ENCODE measurements at regions of chr17 and their contacts with region 1.

Region 1: GRCh38 chr17:43367737-43368242 is 31.0 kb upstream of the ARL4D start:
- DNase-seq: no peak
- H3K4me3 ChIP-seq: peak overlapping the region in 1 of 3 experiments; percentile 16
- H3K27ac ChIP-seq: peak overlapping the region; percentile 98
- H3K4me1 ChIP-seq: peaks cover 15% of the 10 kb centered on the region
- H3K27me3 ChIP-seq: no peaks in the 10 kb centered on the region
- CTCF ChIP-seq: no peak
- POLR2A ChIP-seq: peak; percentile 100

Region 2: DNA sequence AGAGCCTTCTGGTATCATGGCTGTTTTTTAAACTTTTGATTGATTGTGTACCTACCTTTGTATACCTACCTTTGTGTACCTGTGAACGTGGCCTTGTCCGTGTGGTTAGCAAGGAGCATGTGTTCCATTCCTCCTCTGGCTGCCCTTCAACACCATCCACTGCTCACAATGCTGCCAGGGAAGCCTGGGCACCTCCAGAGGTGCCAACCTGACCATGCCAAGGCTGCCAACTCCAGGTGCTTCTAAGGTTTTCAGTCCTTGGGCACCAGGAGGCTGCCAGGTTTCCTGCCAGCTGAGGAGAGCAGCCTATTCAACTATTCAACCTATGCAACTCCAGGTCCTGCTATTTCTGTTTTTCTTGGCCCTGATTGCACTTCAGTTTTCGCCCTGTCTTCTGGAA is 13.4 kb after region 1 on chr17:
- CTCF ChIA-PET with region 1: interaction called, 3 read pairs
- POLR2A ChIA-PET with region 1: interaction called, 95 read pairs
- dilution Hi-C with region 1: no loop called
- intact Hi-C with region 1: no loop called
- DNase-seq: no peak
- H3K4me3 ChIP-seq: no peak overlapping the region
- H3K27ac ChIP-seq: no peak overlapping the region
- H3K4me1 ChIP-seq: no peaks in the 10 kb centered on the region
- H3K27me3 ChIP-seq: peaks cover 2 to 6% of the 10 kb centered on the region in 2 experiments
- CTCF ChIP-seq: no peak
- POLR2A ChIP-seq: no peak

Region 3: DNA sequence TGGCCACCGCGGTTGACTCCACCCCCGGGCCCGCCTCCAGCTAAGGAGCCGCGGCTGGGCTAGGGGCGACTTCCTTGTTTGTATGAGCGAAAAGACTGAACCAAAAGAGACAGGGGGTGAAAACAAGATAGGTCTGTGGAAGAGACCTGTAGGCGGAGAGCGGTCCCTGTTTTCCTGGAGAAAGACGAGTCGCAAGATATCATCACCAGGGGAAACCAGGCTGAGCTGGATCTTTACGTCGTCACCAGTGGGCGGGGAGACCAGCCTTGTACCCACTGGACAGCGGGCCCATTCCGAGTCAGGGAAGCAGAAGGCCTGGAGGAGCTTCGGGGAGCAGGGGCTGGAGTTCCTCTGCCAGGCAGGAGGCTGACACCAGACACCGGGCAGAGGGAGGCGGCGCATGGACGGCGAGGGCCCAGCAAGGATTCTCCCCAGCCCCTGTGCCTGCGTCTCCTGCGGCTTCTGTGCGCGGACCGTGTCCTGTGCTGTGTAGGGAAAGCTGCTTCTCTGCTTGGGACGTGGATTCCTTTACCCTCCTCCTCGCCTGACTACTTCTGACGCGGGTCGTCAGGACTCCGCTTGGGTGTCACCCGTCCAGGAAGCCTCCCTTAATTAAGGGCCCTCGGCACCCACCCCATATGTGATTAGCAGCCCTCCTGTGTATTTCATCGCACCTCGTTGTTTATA is 20.7 kb after region 1 on chr17:
- CTCF ChIA-PET with region 1: interaction called, 22 read pairs
- POLR2A ChIA-PET with region 1: interaction called, 95 read pairs
- dilution Hi-C with region 1: no loop called
- intact Hi-C with region 1: loop called (anchors 1 kb)
- DNase-seq: peak; percentile 94
- H3K4me3 ChIP-seq: peak overlapping the region; percentile 26 to 55 (median 47)
- H3K27ac ChIP-seq: peak overlapping the region; percentile 65
- H3K4me1 ChIP-seq: peaks cover 4% of the 10 kb centered on the region
- H3K27me3 ChIP-seq: peaks cover 2 to 6% of the 10 kb centered on the region in 2 experiments
- CTCF ChIP-seq: no peak
- POLR2A ChIP-seq: peak; percentile 84

Region 4: GRCh38 chr17:43393944-43394482 is 26.2 kb after region 1 on chr17:
- CTCF ChIA-PET with region 1: interaction called, 22 read pairs
- POLR2A ChIA-PET with region 1: interaction called, 95 read pairs
- dilution Hi-C with region 1: no loop called
- intact Hi-C with region 1: loop called (anchors 1 kb)
- DNase-seq: peak; percentile 80
- H3K4me3 ChIP-seq: no peak overlapping the region
- H3K27ac ChIP-seq: no peak overlapping the region
- H3K4me1 ChIP-seq: peaks cover 8% of the 10 kb centered on the region
- H3K27me3 ChIP-seq: no peaks in the 10 kb centered on the region
- CTCF ChIP-seq: peak; percentile 80 to 85
- POLR2A ChIP-seq: no peak

Region 5: DNA sequence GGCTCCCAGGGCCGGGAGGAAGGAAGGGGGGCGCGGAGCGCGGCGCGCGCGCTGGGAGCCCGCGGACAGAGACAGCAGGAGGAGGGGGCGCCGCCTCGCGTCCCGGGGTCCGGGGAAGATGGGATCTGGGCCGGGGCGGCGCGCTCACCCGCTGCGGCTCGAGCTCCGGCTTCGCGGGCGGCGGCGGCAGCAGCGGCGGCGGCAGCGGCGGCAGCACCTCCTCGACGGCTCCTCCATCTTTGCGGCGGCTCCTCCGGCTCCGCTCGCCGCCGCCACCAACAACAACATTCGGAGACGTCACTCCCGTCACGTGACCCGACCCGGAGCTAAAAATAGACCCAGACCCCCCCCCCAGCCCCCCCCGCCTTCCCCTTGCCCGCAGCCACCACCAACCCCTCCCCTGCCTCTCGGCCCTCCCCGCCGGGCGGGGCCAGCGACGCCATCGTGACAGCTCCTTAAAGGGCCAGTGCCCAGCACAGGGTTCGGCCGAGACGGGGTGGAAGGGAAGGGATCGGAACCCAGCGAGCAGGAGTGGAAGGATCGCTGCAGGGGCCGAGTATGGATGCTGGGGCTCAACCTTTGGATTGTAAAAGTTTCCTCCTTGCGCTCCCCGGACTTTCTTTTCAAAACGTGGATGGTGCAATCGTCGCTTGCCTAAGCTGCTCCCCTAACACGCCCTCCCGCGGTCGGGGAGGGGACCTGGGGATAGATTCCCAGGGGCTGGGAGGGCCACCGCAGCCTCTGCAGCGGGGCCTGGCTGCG is 755.7 kb after region 1 on chr17 and contains the start of gene HDAC5:
- CTCF ChIA-PET with region 1: no interaction called
- POLR2A ChIA-PET with region 1: no interaction called
- dilution Hi-C with region 1: no loop called
- intact Hi-C with region 1: no loop called
- DNase-seq: peak; percentile 95
- H3K4me3 ChIP-seq: peak within 1 kb of the TSS; percentile 58 to 80 (median 78)
- H3K27ac ChIP-seq: peak within 1 kb of the TSS; percentile 51
- H3K4me1 ChIP-seq: peaks cover 7% of the 10 kb centered on the region
- H3K27me3 ChIP-seq: peaks cover 2 to 7% of the 10 kb centered on the region in 2 experiments
- CTCF ChIP-seq: peak; percentile 51 to 63
- POLR2A ChIP-seq: no peak
- total RNA-seq, gene HDAC5: 40.2 and 40.4 TPM in 2 replicates

Measured in endothelial cell of umbilical vein (primary cell).